ENCODE measurements at regions of chr1 and their contacts with region 1.

Region 1: GRCh38 chr1:12477936-12478611 is 139.9 kb downstream of the DHRS3 start:
- DNase-seq: peak; percentile 91
- H3K4me3 Mint-ChIP-seq: peak overlapping the region; percentile 49
- H3K27ac Mint-ChIP-seq: peak overlapping the region; percentile 99
- H3K4me1 Mint-ChIP-seq: peaks cover 42% of the 10 kb centered on the region
- H3K27me3 Mint-ChIP-seq: no peaks in the 10 kb centered on the region
- CTCF ChIP-seq: no peak

Region 2: DNA sequence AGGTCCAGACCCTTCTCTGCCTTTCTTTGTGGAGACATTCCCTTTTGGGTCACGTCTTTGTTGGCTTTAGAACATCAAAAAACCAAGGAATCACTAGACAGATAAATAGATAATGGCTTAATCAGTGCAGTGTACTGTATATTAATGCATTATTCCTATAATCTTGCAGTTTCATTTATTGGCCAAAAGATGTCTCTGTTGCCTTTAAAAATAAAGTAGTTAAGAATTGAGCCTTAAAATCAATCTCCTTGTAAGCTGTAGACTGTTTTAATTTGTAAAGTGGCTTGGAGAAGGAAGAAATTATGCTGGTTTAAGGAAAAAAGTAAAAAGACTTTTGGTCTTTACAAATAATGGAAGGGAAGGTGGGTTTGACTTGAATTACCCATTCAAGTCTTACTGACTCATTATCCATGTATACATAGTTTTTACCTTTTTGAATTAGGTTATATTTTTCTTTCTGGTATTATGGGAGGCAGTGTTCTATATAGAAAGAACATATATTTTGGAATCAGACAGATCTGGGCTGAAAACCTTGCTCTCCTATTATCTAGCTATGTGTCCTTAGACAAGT is 163.7 kb before region 1 on chr1:
- CTCF ChIA-PET with region 1: no interaction called
- intact Hi-C with region 1: loop called (anchors 2 kb)
- DNase-seq: no peak
- H3K4me3 Mint-ChIP-seq: no peak overlapping the region
- H3K27ac Mint-ChIP-seq: no peak overlapping the region
- H3K4me1 Mint-ChIP-seq: no peaks in the 10 kb centered on the region
- H3K27me3 Mint-ChIP-seq: no peaks in the 10 kb centered on the region
- CTCF ChIP-seq: no peak

Region 3: DNA sequence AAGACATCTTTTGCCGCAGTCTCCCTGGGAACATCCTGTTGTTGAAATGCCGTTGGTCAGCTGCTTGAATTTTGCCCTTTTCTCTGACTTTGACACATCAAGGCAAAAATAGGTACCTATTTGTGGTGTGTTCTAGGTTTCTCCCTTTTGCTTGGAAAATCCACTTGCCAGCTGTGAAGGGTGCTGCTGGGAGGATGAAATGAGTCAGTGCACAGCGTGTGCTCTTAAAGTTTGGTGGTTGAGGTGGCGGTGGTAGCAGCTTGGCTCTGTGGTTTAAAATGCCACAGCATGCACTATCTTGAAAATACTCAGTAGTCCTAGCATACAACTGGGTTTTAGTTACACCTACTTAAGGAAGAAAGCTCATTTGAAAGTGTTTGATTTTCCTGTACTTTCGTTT is 43.9 kb before region 1 on chr1:
- CTCF ChIA-PET with region 1: interaction called, 3 read pairs
- intact Hi-C with region 1: loop called (anchors 1 kb)
- DNase-seq: no peak
- H3K4me3 Mint-ChIP-seq: no peak overlapping the region
- H3K27ac Mint-ChIP-seq: peak overlapping the region; percentile 89
- H3K4me1 Mint-ChIP-seq: peaks cover 46% of the 10 kb centered on the region
- H3K27me3 Mint-ChIP-seq: no peaks in the 10 kb centered on the region
- CTCF ChIP-seq: no peak

Region 4: DNA sequence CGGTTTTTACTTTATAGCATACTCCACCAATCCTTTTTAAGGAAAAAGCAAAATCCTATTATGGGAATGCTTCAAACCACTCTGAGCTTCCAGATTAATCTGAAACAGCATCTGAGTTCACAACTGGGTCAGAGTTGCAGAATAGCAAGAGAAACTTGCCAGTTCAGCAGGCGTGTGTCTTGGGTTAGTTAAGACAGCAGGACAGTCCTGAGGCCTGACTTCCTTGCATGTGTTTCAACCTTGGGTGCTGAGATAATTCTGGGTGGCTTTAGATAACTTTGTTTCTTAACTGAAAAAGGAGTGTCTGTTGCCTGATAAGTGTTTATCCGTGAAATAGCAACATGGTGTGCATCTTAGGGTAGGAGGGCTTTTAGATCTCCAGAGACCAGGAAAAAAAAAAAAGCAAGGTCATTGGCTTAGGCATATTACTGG is 29.3 kb before region 1 on chr1:
- CTCF ChIA-PET with region 1: no interaction called
- intact Hi-C with region 1: no loop called
- DNase-seq: no peak
- H3K4me3 Mint-ChIP-seq: no peak overlapping the region
- H3K27ac Mint-ChIP-seq: no peak overlapping the region
- H3K4me1 Mint-ChIP-seq: peaks cover 13% of the 10 kb centered on the region
- H3K27me3 Mint-ChIP-seq: no peaks in the 10 kb centered on the region
- CTCF ChIP-seq: no peak

Region 5: GRCh38 chr1:12539705-12540579 is 61.9 kb after region 1 on chr1:
- CTCF ChIA-PET with region 1: no interaction called
- intact Hi-C with region 1: loop called (anchors 2 kb)
- DNase-seq: peak; percentile 78
- H3K4me3 Mint-ChIP-seq: no peak overlapping the region
- H3K27ac Mint-ChIP-seq: peak overlapping the region; percentile 15
- H3K4me1 Mint-ChIP-seq: peaks cover 47% of the 10 kb centered on the region
- H3K27me3 Mint-ChIP-seq: no peaks in the 10 kb centered on the region
- CTCF ChIP-seq: no peak

Region 6: GRCh38 chr1:12619792-12620487 is 141.9 kb after region 1 on chr1:
- CTCF ChIA-PET with region 1: interaction called, 4 read pairs
- intact Hi-C with region 1: loop called (anchors 1 kb)
- DNase-seq: peak; percentile 79
- H3K4me3 Mint-ChIP-seq: peak overlapping the region; percentile 92
- H3K27ac Mint-ChIP-seq: peak overlapping the region; percentile 96
- H3K4me1 Mint-ChIP-seq: peaks cover 5% of the 10 kb centered on the region
- H3K27me3 Mint-ChIP-seq: no peaks in the 10 kb centered on the region
- CTCF ChIP-seq: peak; percentile 84

Measured in Calu3 (cell line).